ENCODE measurements at regions of chr14 and their contacts with region 1.

Region 1: DNA sequence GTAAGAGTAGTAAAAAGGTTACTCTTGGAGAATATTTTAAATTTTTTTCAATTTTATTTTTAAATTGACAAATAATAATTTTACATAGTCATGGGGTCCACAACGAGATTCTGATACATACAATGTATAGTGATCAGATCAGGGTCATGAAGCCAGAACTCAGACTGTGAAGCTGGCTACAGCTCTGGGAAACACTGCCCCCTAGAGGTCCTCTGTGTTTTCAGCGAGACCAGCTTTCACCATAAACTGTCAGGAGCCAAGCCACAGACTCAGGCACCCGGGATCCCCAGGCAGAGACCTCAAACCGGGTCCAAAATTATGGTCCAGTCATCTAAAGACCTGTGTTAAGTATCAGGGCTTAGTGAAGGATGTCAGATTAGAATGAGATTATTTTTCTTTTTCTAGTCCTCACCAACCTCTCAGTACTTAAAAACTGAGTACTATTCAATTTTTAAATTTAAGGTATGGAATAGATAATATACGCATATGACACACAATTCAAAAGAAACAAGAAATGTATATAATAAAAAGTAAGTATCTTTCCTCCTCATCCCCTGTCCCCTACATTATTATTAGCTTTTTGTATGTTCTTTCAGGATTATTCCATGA is 397.1 kb downstream of the MDGA2 start:
- DNase-seq: peak in 2 of 3 donors; percentile 37 to 67
- ATAC-seq: peak; percentile 64
- H3K4me3 ChIP-seq: no peak overlapping the region
- H3K4me1 ChIP-seq: no peaks in the 10 kb centered on the region
- CTCF ChIP-seq: peak; percentile 45

Region 2: GRCh38 chr14:46973295-46973694 is 305.0 kb before region 1 on chr14:
- intact Hi-C with region 1: loop called in 1 of 2 experiments (anchors 10 kb)
- DNase-seq: no peak
- ATAC-seq: no peak
- H3K4me3 ChIP-seq: no peak overlapping the region
- H3K4me1 ChIP-seq: no peaks in the 10 kb centered on the region
- CTCF ChIP-seq: no peak

Measured in mucosa of descending colon (tissue), 3 donors.